ENCODE measurements at regions of chr6 and their contacts with region 1.

Region 1: GRCh38 chr6:29649701-29650673 is 6.9 kb upstream of the MOG start:
- DNase-seq: peak; percentile 99
- ATAC-seq: peak; percentile 93
- H3K4me3 ChIP-seq: peak overlapping the region; percentile 61 to 79 (median 74)
- H3K4me3 Mint-ChIP-seq: peak overlapping the region; percentile 98
- H3K27ac ChIP-seq: peak overlapping the region; percentile 91 to 95
- H3K27ac Mint-ChIP-seq: peak overlapping the region; percentile 100
- H3K4me1 ChIP-seq: peaks cover 3 to 15% of the 10 kb centered on the region in 2 donors
- H3K4me1 Mint-ChIP-seq: peaks cover 16% of the 10 kb centered on the region
- H3K27me3 ChIP-seq: peaks cover 0 to 10% (median 3%) of the 10 kb centered on the region in 4 experiments
- H3K27me3 Mint-ChIP-seq: peaks cover 4% of the 10 kb centered on the region
- CTCF ChIP-seq: peak; percentile 96

Region 2: GRCh38 chr6:29617782-29618557 is 32.0 kb before region 1 on chr6:
- CTCF ChIA-PET with region 1: interaction called, 226 read pairs
- POLR2A ChIA-PET with region 1: no interaction called
- intact Hi-C with region 1: no loop called
- DNase-seq: no peak
- ATAC-seq: peak; percentile 67
- H3K4me3 ChIP-seq: no peak overlapping the region
- H3K4me3 Mint-ChIP-seq: no peak overlapping the region
- H3K27ac ChIP-seq: no peak overlapping the region
- H3K27ac Mint-ChIP-seq: no peak overlapping the region
- H3K4me1 ChIP-seq: no peaks in the 10 kb centered on the region
- H3K4me1 Mint-ChIP-seq: no peaks in the 10 kb centered on the region
- H3K27me3 ChIP-seq: no peaks in the 10 kb centered on the region
- H3K27me3 Mint-ChIP-seq: no peaks in the 10 kb centered on the region
- CTCF ChIP-seq: peak; percentile 38

Region 3: GRCh38 chr6:29665942-29666825 is 16.2 kb after region 1 on chr6:
- CTCF ChIA-PET with region 1: interaction called, 87 read pairs
- POLR2A ChIA-PET with region 1: no interaction called
- intact Hi-C with region 1: no loop called
- DNase-seq: no peak
- ATAC-seq: no peak
- H3K4me3 ChIP-seq: no peak overlapping the region
- H3K4me3 Mint-ChIP-seq: no peak overlapping the region
- H3K27ac ChIP-seq: no peak overlapping the region
- H3K27ac Mint-ChIP-seq: no peak overlapping the region
- H3K4me1 ChIP-seq: no peaks in the 10 kb centered on the region
- H3K4me1 Mint-ChIP-seq: no peaks in the 10 kb centered on the region
- H3K27me3 ChIP-seq: peaks cover 0 to 23% (median 10%) of the 10 kb centered on the region in 4 experiments
- H3K27me3 Mint-ChIP-seq: peaks cover 7% of the 10 kb centered on the region
- CTCF ChIP-seq: no peak

Region 4: GRCh38 chr6:29696155-29697125 is 46.5 kb after region 1 on chr6:
- CTCF ChIA-PET with region 1: interaction called, 14 read pairs
- POLR2A ChIA-PET with region 1: no interaction called
- intact Hi-C with region 1: no loop called
- DNase-seq: no peak
- ATAC-seq: no peak
- H3K4me3 ChIP-seq: no peak overlapping the region
- H3K4me3 Mint-ChIP-seq: no peak overlapping the region
- H3K27ac ChIP-seq: no peak overlapping the region
- H3K27ac Mint-ChIP-seq: no peak overlapping the region
- H3K4me1 ChIP-seq: no peaks in the 10 kb centered on the region
- H3K4me1 Mint-ChIP-seq: peaks cover 3% of the 10 kb centered on the region
- H3K27me3 ChIP-seq: no peaks in the 10 kb centered on the region
- H3K27me3 Mint-ChIP-seq: peaks cover 4% of the 10 kb centered on the region
- CTCF ChIP-seq: peak; percentile 18

Region 5: DNA sequence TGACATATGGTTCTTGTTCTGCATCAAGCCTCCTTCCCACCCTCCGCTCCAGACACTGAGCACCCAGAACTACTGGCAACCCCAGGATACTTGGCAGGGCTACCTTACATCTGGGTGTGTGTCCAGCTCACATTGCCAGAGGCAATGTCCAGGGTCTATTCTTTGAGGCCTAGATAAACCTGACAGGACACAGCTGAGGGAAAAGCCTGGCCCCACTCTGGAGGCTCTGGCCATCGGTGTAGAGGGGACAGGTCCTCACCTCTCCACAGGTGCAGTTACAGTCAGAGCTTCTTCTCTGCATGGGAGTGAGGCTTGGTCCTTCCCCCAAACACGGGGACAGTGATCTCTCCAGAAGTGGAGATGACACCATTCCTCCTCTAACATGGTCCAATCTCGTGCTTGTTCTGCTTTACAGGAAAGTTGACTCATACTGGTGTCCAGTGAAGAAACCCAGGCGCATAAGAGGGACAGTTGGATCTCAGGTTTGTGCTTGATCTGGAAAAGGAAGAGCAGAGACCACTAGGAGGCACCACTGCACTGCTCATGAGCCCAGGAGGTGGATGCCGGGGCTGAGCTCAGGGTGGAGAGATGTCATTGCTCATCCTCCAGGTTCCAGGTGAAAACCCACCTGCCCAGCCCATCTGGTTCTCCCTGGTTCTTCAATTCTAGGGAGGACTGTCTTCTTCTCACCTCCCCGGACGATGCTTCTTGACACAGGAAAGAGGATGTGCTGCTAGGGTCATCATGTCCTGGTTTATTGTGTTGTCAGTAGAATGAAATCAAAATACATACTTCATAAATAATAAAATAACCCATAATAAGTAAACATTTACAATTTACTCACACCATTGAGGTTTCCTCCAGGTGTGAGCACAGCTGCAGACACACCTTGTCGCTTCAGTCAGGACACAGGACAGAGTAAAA is 88.0 kb after region 1 on chr6:
- CTCF ChIA-PET with region 1: interaction called, 12 read pairs
- POLR2A ChIA-PET with region 1: no interaction called
- intact Hi-C with region 1: no loop called
- DNase-seq: peak; percentile 82
- ATAC-seq: peak; percentile 85
- H3K4me3 ChIP-seq: no peak overlapping the region
- H3K4me3 Mint-ChIP-seq: no peak overlapping the region
- H3K27ac ChIP-seq: no peak overlapping the region
- H3K27ac Mint-ChIP-seq: no peak overlapping the region
- H3K4me1 ChIP-seq: peaks cover 0 to 5% of the 10 kb centered on the region in 2 donors
- H3K4me1 Mint-ChIP-seq: peaks cover 12% of the 10 kb centered on the region
- H3K27me3 ChIP-seq: no peaks in the 10 kb centered on the region
- H3K27me3 Mint-ChIP-seq: no peaks in the 10 kb centered on the region
- CTCF ChIP-seq: peak; percentile 82

Region 6: DNA sequence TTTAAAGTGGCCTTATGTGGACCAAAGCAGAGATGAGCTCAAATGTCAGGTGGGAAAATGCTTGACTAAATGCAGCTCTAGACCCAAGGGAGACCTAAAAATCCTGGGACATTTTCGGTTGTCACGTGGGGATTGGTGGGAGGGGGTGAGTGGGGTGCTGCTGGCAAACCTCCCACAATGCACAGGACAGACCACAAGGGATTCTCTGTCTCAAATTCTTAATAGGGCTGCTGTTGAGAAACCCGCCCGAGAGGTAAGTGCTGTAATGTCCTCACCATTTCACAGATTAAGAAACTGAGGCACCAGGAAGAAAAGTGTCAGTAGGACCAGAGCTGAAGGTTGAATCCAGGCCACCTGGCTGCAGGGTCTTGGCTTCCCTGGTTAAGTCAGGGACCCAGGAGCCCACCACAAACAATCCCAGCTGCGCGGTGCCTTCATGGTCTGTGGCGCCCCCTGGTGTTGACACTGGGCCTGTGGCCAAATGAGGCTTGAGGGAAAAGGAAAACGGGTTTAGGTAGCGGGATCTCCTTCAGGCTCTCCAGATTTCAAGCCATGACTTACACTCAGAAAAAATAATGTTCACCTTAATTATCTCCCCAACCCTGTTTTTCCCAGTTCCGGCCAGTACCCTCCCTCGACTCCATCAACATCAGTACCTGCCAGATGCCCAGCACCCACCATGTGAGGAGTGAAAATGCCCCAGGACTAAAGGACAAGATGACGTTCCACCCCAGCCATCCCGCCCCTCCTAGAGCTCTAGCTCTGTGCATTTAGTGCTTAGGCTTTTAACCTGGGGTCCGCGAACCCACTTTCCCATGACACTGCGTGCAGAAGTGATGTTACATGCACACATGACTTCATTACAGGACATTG is 184.8 kb after region 1 on chr6:
- CTCF ChIA-PET with region 1: interaction called, 17 read pairs
- POLR2A ChIA-PET with region 1: no interaction called
- intact Hi-C with region 1: no loop called
- DNase-seq: peak; percentile 69
- ATAC-seq: no peak
- H3K4me3 ChIP-seq: no peak overlapping the region
- H3K4me3 Mint-ChIP-seq: no peak overlapping the region
- H3K27ac ChIP-seq: no peak overlapping the region
- H3K27ac Mint-ChIP-seq: no peak overlapping the region
- H3K4me1 ChIP-seq: no peaks in the 10 kb centered on the region
- H3K4me1 Mint-ChIP-seq: no peaks in the 10 kb centered on the region
- H3K27me3 ChIP-seq: peaks cover 0 to 43% (median 19%) of the 10 kb centered on the region in 4 experiments
- H3K27me3 Mint-ChIP-seq: peaks cover 74% of the 10 kb centered on the region
- CTCF ChIP-seq: peak; percentile 89